Left colon (tissue), 2 donors: ENCODE measurements at regions of chr9 and their contacts with region 1.

Region 1: DNA sequence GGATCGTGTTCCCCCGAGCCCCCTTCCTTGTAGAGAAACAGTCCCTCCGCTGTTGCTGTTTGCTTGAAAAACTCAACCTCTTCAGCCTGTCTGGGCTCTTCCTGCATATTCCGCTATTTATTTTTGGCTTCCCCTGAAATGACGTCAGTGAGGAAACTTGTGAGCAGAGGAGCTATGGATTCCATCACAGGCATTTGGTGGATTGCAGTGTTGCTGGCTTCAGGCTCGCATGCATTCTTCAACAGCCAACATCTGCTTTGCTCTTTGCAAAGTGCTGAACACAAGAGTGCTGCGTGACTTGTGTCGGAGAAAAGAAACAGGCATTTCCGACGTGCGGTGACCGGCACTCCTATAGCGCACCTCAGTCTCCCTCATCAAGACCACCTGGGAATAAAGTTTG is 232.7 kb downstream of the RFK start:
- DNase-seq: no peak
- ATAC-seq: no peak

Region 2: GRCh38 chr9:75903785-75904360 is 257.7 kb before region 1 on chr9:
- intact Hi-C with region 1: loop called in 1 of 2 experiments (anchors 10 kb)
- DNase-seq: no peak
- ATAC-seq: no peak